ENCODE measurements at regions of chr19 and their contacts with region 1.

Region 1: DNA sequence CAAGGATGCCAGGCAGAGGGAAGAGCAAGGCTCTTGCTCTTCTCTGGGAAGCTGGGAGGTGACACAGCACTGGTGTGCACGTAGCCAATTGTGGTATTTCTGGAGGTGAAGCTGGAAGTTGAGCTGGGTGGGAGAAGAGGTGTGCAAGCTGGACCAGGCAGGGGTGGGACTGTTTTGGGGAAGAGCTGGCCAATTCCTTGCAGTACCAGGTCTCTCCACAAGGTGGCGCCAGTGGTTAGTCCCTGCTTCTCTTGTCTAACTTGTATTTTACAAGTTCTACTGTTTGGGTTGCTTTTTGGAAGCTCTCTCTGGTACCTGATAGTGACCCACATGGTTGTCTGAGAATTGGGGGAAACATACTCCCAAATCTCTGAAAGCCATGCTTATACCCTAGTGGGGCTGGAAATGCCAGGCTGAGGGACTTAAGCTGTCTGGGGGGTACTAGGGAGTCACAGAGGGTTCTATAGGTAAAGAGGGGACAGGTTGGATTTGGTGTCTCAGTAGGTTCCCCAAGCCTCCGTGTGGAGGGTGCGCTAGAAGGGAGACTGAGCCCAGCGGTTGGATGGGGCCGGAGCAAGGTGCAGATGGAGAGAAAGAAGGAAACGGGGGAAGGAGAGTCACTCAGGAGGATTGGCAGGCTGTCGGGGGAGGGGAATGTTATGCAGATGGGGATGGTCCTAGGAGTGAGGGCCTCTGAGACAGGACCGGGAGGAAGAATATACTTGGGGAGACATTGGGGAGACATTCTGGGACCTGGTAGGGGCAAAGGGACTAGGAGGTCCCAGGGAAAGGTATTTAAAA is 3.0 kb downstream of the HPN start:
- DNase-seq: peak; percentile 62
- H3K4me3 ChIP-seq: no peak overlapping the region
- H3K27ac ChIP-seq: no peak overlapping the region
- H3K4me1 ChIP-seq: peaks cover 14 to 28% (median 23%) of the 10 kb centered on the region in 4 donors
- H3K27me3 ChIP-seq: peaks cover 22% of the 10 kb centered on the region
- CTCF ChIP-seq: peak; percentile 87 to 98 (median 96)
- EP300 ChIP-seq: no peak
- POLR2A ChIP-seq: no peak

Region 2: DNA sequence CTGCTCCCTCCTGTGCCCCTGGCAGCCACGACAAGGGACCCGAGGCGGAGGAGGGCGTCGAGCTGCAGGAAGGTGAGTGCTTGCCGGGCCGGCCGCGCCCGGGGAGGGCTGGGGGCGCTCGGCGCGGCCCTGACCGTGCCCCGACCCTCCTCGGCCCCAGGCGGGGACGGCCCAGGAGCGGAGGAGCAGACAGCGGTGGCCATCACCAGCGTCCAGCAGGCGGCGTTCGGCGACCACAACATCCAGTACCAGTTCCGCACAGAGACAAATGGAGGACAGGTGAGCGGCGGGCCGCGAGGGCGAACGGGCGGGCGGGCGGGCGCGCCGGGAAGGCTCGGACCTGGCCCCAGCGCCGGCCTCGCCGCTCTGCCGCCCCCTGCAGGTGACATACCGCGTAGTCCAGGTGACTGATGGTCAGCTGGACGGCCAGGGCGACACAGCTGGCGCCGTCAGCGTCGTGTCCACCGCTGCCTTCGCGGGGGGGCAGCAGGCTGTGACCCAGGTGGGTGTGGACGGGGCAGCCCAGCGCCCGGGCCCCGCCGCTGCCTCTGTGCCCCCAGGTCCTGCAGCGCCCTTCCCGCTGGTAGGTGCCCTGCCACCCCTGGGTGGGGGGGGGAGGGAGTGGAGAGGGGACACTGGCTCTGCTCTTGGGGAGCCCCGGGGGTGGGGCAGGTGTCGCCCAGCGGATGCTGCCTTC is 225.1 kb after region 1 on chr19:
- in situ Hi-C with region 1: no loop called
- intact Hi-C with region 1: loop called (anchors 5 kb)
- DNase-seq: peak; percentile 91
- H3K4me3 ChIP-seq: peak overlapping the region; percentile 58 to 85 (median 76)
- H3K27ac ChIP-seq: peak overlapping the region; percentile 95 to 99 (median 98)
- H3K4me1 ChIP-seq: peaks cover 0 to 36% (median 14%) of the 10 kb centered on the region in 4 donors
- H3K27me3 ChIP-seq: no peaks in the 10 kb centered on the region
- CTCF ChIP-seq: peak; percentile 50 to 87 (median 76)
- EP300 ChIP-seq: no peak
- POLR2A ChIP-seq: peak; percentile 10

Region 3: GRCh38 chr19:35421362-35421761 is 376.8 kb after region 1 on chr19:
- in situ Hi-C with region 1: no loop called
- intact Hi-C with region 1: no loop called
- DNase-seq: no peak
- H3K4me3 ChIP-seq: no peak overlapping the region
- H3K27ac ChIP-seq: no peak overlapping the region
- H3K4me1 ChIP-seq: peaks cover 0 to 11% (median 3%) of the 10 kb centered on the region in 4 donors
- H3K27me3 ChIP-seq: peaks cover 10% of the 10 kb centered on the region
- CTCF ChIP-seq: no peak
- EP300 ChIP-seq: no peak
- POLR2A ChIP-seq: no peak

Measured in transverse colon (tissue), 4 donors.